ENCODE measurements at regions of chr1 and their contacts with region 1.

Region 1: DNA sequence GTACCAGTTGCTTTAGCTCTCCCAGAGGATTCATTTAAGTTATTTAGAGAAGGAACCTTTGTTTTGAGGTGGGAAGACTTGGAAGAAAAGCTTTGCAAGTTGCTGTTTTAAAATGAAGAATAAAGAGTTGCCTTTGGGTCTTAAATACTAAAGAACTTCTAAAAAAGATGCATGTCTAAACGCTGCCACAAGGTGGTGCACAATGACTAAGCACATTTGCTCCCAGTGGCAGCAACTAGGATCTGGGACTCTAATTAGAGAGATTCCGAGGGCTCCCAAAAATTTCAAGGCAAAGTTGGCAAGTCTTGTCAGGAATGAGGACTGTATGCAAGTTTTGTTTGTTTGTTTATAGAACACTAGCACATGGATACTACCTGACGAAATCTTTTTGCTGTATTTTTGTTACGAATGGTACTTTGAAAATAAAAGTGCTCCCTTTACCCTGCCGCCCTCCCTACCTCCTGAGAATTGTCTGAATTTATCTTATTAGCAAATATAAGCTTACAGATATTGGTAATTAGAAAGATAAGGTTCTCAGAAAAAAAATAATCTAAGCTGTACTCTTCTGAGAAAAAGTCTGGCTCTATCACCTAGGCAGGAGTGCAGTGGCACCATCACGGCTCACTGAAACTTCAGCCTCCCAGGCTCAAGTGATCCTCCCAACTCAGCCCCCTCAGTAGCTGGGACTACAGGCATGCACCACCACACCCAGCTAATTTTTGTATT is 121.8 kb downstream of the HFM1 start:
- DNase-seq: peak in 8 of 10 donors; percentile 18 to 70 (median 46)
- H3K4me3 ChIP-seq: peak overlapping the region in 40 of 59 donors; percentile 1 to 56 (median 36)
- H3K27ac ChIP-seq: no peak overlapping the region
- H3K27me3 ChIP-seq: no peaks in the 10 kb centered on the region
- CTCF ChIP-seq: peak; percentile 56 to 95 (median 87)

Region 2: GRCh38 chr1:91104712-91105111 is 178.1 kb before region 1 on chr1:
- intact Hi-C with region 1: no loop called
- DNase-seq: no peak
- H3K4me3 ChIP-seq: no peak overlapping the region
- H3K27ac ChIP-seq: no peak overlapping the region
- H3K27me3 ChIP-seq: no peaks in the 10 kb centered on the region
- CTCF ChIP-seq: no peak

Region 3: DNA sequence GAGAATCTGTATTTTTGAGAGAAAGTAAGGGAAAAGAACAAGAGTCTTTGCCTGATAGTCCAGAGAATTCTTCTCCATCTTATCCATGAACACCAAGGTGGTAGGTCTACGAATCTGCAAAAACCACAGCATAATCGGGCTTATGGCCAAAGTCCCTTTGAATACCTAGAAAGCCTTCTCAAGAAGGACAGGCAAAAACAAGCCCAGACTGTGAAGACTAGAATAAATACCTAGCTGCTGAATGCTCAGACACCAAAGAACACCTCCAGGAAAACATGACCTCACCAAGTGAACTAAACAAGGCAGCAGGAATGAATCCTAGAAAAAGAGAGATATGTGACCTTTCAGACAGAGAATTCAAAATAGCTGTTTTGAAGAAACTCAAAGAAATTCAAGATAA is 42.6 kb after region 1 on chr1:
- intact Hi-C with region 1: no loop called
- DNase-seq: no peak
- H3K4me3 ChIP-seq: no peak overlapping the region
- H3K27ac ChIP-seq: no peak overlapping the region
- H3K27me3 ChIP-seq: no peaks in the 10 kb centered on the region
- CTCF ChIP-seq: no peak

Region 4: GRCh38 chr1:91404151-91405012 is 121.5 kb after region 1 on chr1 and contains the start of gene HFM1:
- intact Hi-C with region 1: loop called in 1 of 2 experiments (anchors 5 kb)
- DNase-seq: peak; percentile 40 to 87 (median 75)
- H3K4me3 ChIP-seq: peak within 1 kb of the TSS; percentile 38 to 80 (median 67)
- H3K27ac ChIP-seq: peak within 1 kb of the TSS in 57 of 59 donors; percentile 20 to 92 (median 80)
- H3K27me3 ChIP-seq: peaks cover 0 to 39% (median 0%) of the 10 kb centered on the region in 45 donors
- CTCF ChIP-seq: peak in 32 of 56 donors; percentile 7 to 53 (median 31)
- total RNA-seq, gene HFM1: 0.74 to 8.0 (median 3.6) TPM